Adrenal gland (tissue), 19 donors: ENCODE measurements at regions of chr11 and their contacts with region 1.

Region 1: DNA sequence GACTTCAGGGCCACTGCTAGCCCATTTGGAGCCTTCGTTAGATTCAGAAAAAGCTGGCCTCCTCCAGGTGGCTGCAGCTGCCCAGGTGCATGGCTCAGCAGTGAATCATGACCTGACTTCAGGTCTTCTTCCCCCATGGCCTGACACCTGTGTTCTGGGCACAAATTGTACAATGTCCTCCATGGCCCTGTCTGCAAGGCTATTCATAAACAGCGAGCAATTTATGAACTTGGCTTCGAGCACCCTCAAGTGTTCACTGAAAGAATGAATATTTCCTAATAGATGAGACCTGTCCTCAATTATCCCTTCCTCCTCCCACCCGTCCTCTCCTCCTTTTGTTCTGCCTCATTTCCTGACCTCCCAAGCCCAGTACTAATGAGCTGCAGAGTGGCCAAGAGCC is 12.2 kb upstream of the VPS37C start:
- DNase-seq: peak in 1 of 7 donors; percentile 49
- H3K4me3 ChIP-seq: no peak overlapping the region
- H3K27ac ChIP-seq: no peak overlapping the region
- H3K4me1 ChIP-seq: no peaks in the 10 kb centered on the region
- H3K27me3 ChIP-seq: peaks cover 3% of the 10 kb centered on the region
- CTCF ChIP-seq: peak in 5 of 6 experiments; percentile 23 to 51 (median 41)
- POLR2A ChIP-seq: no peak

Region 2: DNA sequence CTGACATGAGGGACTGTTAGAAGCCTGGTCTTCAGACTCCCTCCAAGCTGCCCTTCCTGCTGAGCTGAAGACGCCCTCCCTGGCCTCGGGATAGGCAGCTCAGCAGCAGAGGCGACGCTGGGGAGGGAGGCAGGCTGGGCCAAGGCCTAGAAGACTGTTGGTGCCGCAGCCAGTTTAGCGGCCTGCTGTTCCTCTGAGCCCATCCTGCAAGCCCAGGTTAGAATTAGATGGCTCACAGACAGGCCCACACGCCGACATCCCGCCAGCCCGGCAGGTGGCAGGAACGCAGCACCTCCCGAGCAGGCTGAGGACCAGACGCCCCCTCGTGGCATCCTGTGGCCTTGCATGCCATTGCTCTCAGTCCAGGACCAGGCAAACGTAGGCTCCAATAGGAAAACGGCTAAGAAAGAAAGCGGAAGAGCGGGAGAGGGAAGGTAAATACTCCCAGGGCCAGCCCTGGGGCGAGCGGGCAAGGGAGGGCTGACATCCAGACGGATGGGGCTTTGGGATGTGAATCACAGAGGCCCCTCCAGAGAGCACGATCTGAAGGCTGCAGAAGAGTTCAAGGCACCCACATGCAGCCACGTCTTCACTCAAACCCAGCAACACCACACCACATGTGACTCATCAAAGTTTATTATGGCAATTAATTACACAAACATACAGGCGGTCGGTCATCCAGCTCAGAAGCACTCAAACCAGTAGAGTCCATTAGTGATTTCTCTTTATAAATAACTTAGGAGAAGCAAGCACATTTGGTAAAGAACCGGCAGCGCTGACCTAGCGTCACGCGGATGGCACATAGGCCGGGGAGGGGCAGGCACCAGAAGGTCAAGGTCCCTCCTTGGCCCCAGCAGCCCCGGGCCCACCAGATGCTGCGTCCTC is 43.6 kb before region 1 on chr11:
- intact Hi-C with region 1: loop called in 1 of 2 experiments (anchors 5 kb)
- DNase-seq: peak; percentile 91 to 97 (median 93)
- H3K4me3 ChIP-seq: no peak overlapping the region
- H3K27ac ChIP-seq: peak overlapping the region in 4 of 5 donors; percentile 38 to 85 (median 74)
- H3K4me1 ChIP-seq: peaks cover 7 to 13% of the 10 kb centered on the region in 2 donors
- H3K27me3 ChIP-seq: no peaks in the 10 kb centered on the region
- CTCF ChIP-seq: peak; percentile 97 to 100 (median 100)
- POLR2A ChIP-seq: peak in 1 of 2 donors; percentile 36

Region 3: DNA sequence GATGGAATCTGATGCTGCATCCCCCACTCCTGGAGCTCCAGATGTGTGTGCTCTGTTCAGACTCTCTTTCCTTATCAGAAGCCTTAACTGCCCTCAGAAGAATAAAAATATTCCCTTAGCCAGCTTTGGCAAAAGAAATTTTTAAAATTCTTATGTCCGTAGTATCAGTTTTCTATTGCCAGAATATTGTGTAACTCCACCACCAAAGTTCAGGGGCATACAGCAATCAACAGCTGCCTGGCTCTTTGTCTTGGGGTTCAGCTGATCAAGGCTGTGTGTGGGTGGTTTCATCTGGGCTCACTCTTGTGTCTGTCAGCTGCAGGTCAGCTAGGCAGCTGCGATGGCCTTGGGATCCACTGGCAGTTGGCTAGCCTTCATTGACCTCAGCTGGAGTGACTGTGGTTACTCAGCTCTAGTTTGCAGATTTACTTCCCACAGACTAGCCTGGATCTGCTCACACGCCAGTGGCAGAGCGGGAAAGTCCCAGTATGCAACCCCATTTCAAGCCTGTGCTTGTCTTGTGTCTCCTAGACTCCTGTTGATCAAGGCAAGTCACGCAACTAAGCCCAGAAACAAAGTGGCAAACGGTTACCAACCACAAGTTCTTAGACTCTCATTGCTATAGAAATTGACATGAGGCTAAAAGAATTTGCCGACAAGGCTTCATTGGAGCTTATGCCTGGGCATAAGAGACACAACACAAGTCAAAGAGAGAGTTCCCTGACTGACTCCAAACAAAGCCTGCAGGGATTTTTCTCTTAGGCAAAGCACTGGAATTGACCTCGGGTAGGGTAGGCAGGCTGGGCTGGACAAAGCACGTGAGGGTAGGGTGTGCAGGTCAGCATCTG is 196.1 kb after region 1 on chr11:
- intact Hi-C with region 1: no loop called
- DNase-seq: peak; percentile 80 to 97 (median 95)
- H3K4me3 ChIP-seq: no peak overlapping the region
- H3K27ac ChIP-seq: peak overlapping the region; percentile 61 to 98 (median 86)
- H3K4me1 ChIP-seq: peaks cover 51 to 76% of the 10 kb centered on the region in 2 donors
- H3K27me3 ChIP-seq: no peaks in the 10 kb centered on the region
- CTCF ChIP-seq: no peak
- POLR2A ChIP-seq: peak in 1 of 2 donors; percentile 42